OCI-LY7 (cell line): ENCODE measurements at regions of chr9 and their contacts with region 1.

Region 1: DNA sequence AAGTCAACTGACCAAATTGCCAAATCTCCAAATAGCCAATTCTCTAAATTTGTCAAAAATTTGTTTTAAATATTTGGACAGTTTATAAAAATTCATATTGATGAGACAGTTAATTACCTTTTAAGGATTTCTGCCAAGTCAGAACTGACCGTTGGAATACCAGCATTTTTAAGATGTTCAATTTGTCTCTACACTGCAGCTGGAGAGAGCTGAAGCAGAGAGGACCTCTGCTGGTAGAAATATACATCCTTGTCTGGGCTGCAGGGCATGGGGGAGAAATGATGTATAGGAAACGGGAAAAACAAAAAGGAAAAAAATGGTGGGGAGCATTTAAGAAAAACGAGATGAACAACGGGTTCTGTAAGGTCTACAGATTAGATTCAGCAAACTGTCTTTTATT is 16.8 kb downstream of the NR6A1 start:
- DNase-seq: peak; percentile 25
- H3K4me3 ChIP-seq: no peak overlapping the region
- H3K27ac ChIP-seq: no peak overlapping the region
- H3K4me1 ChIP-seq: peaks cover 14% of the 10 kb centered on the region
- CTCF ChIP-seq: peak; percentile 83

Region 2: GRCh38 chr9:124617471-124618141 is 136.7 kb before region 1 on chr9:
- CTCF ChIA-PET with region 1: interaction called, 3 read pairs
- POLR2A ChIA-PET with region 1: interaction called, 6 read pairs
- intact Hi-C with region 1: loop called (anchors 1 kb)
- DNase-seq: peak; percentile 76
- H3K4me3 ChIP-seq: no peak overlapping the region
- H3K27ac ChIP-seq: no peak overlapping the region
- H3K4me1 ChIP-seq: peaks cover 6% of the 10 kb centered on the region
- CTCF ChIP-seq: peak; percentile 98

Region 3: GRCh38 chr9:124812401-124813016 is 58.2 kb after region 1 on chr9:
- CTCF ChIA-PET with region 1: no interaction called
- POLR2A ChIA-PET with region 1: no interaction called
- intact Hi-C with region 1: no loop called
- DNase-seq: no peak
- H3K4me3 ChIP-seq: no peak overlapping the region
- H3K27ac ChIP-seq: no peak overlapping the region
- H3K4me1 ChIP-seq: no peaks in the 10 kb centered on the region
- CTCF ChIP-seq: no peak

Region 4: GRCh38 chr9:124894741-124895170 is 140.5 kb after region 1 on chr9:
- CTCF ChIA-PET with region 1: no interaction called
- POLR2A ChIA-PET with region 1: no interaction called
- intact Hi-C with region 1: no loop called
- DNase-seq: peak; percentile 83
- H3K4me3 ChIP-seq: no peak overlapping the region
- H3K27ac ChIP-seq: no peak overlapping the region
- H3K4me1 ChIP-seq: peaks cover 8% of the 10 kb centered on the region
- CTCF ChIP-seq: peak; percentile 88